Breast epithelium (tissue), 4 donors: ENCODE measurements at regions of chr5 and their contacts with region 1.

Region 1: GRCh38 chr5:128343168-128343567 is 194.9 kb downstream of the FBN2 start:
- DNase-seq: no peak
- H3K4me3 ChIP-seq: no peak overlapping the region
- H3K27ac ChIP-seq: no peak overlapping the region
- H3K4me1 ChIP-seq: no peaks in the 10 kb centered on the region
- H3K27me3 ChIP-seq: no peaks in the 10 kb centered on the region
- CTCF ChIP-seq: no peak
- POLR2A ChIP-seq: no peak

Region 2: DNA sequence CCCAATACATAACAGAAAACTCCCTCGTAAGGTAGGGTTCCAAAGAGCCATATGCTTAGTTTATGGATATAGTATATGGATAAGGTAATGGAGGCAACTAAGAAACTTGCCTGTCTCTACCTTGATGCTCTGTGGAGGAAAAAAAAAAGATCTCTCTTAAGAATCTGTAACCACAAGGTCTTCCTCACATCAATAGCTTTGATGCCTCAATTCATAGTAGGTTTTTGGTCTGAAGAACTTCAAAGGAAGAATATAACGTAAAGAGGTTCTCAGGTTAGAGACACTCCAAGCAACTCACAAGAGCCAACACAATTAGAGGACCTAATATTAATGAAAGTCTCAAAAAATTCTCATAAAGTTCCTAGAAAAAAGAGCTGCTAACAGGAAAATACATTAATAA is 54.7 kb after region 1 on chr5:
- intact Hi-C with region 1: loop called (anchors 2 kb)
- DNase-seq: no peak
- H3K4me3 ChIP-seq: no peak overlapping the region
- H3K27ac ChIP-seq: no peak overlapping the region
- H3K4me1 ChIP-seq: no peaks in the 10 kb centered on the region
- H3K27me3 ChIP-seq: no peaks in the 10 kb centered on the region
- CTCF ChIP-seq: no peak
- POLR2A ChIP-seq: no peak